Activated CD4-positive, alpha-beta T cell treated with anti-CD3 and anti-CD28 coated beads, Interleukin-2, amount 10 ng/mL, durations not matched to agents 7 days and 5 days (primary cell): ENCODE measurements at regions of chr7 and their contacts with region 1.

Region 1: GRCh38 chr7:96308253-96308949 is 13.5 kb downstream of the SLC25A13 start:
- DNase-seq: no peak
- H3K4me3 Mint-ChIP-seq: no peak overlapping the region
- H3K27ac Mint-ChIP-seq: peak overlapping the region; percentile 6
- H3K4me1 Mint-ChIP-seq: peaks cover 20% of the 10 kb centered on the region
- H3K27me3 Mint-ChIP-seq: no peaks in the 10 kb centered on the region

Region 2: DNA sequence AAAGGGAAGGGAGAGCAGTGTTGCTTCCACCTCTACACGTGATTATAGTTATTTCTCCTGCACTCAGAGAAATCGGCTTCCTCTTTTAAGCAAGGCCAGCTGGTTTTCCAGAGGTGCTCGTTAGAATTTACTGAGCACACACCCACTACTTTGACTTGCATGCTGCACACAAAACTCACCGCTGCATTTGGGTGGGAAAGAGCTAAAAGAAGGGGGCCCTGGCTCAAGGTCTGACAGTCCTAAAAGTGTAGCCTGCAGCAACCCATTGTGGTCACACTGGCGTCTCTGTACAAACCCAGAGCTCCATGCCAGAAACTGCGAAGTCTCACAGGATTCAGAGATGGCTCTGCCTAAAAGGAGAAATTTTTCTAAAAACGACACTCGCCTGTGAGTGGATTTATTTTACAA is 120.2 kb before region 1 on chr7:
- CTCF ChIA-PET with region 1: no interaction called
- POLR2A ChIA-PET with region 1: no interaction called
- DNase-seq: no peak
- H3K4me3 Mint-ChIP-seq: no peak overlapping the region
- H3K27ac Mint-ChIP-seq: no peak overlapping the region
- H3K4me1 Mint-ChIP-seq: no peaks in the 10 kb centered on the region
- H3K27me3 Mint-ChIP-seq: no peaks in the 10 kb centered on the region

Region 3: GRCh38 chr7:96285579-96285978 is 22.8 kb before region 1 on chr7:
- CTCF ChIA-PET with region 1: interaction called, 12 read pairs
- POLR2A ChIA-PET with region 1: no interaction called
- DNase-seq: peak; percentile 80
- H3K4me3 Mint-ChIP-seq: peak overlapping the region; percentile 4
- H3K27ac Mint-ChIP-seq: peak overlapping the region; percentile 97
- H3K4me1 Mint-ChIP-seq: peaks cover 43% of the 10 kb centered on the region
- H3K27me3 Mint-ChIP-seq: no peaks in the 10 kb centered on the region

Region 4: GRCh38 chr7:96327429-96327828 is 19.0 kb after region 1 on chr7:
- CTCF ChIA-PET with region 1: no interaction called
- POLR2A ChIA-PET with region 1: no interaction called
- DNase-seq: no peak
- H3K4me3 Mint-ChIP-seq: no peak overlapping the region
- H3K27ac Mint-ChIP-seq: no peak overlapping the region
- H3K4me1 Mint-ChIP-seq: peaks cover 5% of the 10 kb centered on the region
- H3K27me3 Mint-ChIP-seq: peaks cover 7% of the 10 kb centered on the region